Activated T-helper 2 cell treated with anti-CD3 and anti-CD28 coated beads, Interferon-gamma antibody, Interleukin-2, Interleukin-4, amounts not matched to agents 10 μg/mL and 5 μg/mL and 100 μg/mL, durations not matched to agents 14 hours and 24 hours and 36 hours (primary cell): ENCODE measurements at regions of chr9 and their contacts with region 1.

Region 1: DNA sequence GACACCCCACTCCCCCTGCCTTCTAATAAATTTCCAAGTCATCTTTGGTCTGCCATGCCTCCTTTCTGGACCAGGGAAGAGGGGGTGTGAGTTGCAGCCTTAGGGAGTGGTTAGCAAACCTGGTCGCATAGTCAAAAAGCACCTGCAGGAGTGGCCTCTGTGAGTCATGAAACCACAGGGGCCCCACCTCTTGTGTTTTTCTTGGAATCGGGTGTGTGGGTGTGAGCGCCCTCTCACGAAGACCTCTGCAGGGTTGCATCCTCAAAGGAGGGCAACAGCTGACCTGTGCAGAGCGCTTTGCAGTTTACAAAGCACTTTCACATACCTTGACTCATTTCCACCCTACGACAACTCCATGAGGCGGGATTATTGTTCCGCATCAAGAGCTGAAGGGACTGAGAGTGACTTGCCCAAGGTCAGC is 36.8 kb upstream of the TEX48 start:
- DNase-seq: peak; percentile 93
- H3K4me3 Mint-ChIP-seq: peak overlapping the region; percentile 38
- H3K27ac Mint-ChIP-seq: peak overlapping the region; percentile 94
- H3K4me1 Mint-ChIP-seq: peaks cover 74% of the 10 kb centered on the region
- H3K27me3 Mint-ChIP-seq: no peaks in the 10 kb centered on the region

Region 2: DNA sequence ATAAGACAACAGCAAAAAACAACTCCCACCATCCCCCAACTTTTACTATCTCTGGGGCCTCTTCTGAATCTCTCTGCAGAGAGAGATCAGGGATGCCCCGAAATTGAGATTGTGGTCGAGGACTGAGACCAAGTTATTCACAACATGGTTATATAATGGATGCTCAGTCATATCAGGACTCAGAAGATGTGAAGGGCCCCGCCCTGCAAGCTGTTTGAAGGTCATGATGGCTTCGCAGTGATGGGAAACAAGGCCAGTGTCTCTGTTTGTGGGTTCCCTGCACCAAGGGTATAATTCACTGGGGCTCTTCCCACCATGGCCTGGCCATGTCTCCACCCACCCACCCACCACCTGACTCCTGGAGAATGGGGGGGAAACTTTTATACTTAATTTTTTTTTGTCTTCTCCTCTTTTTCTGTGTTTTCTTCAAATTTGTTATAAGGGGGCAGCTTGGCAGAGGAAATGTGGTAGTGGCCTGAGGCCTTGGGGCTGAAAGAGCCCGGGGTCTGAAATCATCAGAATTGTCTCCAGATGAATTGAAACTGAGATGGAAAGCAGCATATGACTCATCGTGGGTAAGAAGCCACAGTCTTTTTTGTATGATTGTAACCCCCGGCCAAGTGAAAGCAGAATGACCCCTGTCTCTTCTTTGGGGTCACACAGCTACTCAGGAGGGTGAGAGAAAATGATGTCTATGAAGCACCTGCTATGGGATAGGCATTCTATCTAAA is 21.8 kb before region 1 on chr9:
- intact Hi-C with region 1: loop called (anchors 1 kb)
- DNase-seq: peak; percentile 75
- H3K4me3 Mint-ChIP-seq: peak overlapping the region; percentile 52
- H3K27ac Mint-ChIP-seq: peak overlapping the region; percentile 96
- H3K4me1 Mint-ChIP-seq: peaks cover 87% of the 10 kb centered on the region
- H3K27me3 Mint-ChIP-seq: no peaks in the 10 kb centered on the region

Region 3: GRCh38 chr9:114738581-114739316 is 19.9 kb after region 1 on chr9:
- intact Hi-C with region 1: loop called (anchors 1 kb)
- DNase-seq: peak; percentile 62
- H3K4me3 Mint-ChIP-seq: no peak overlapping the region
- H3K27ac Mint-ChIP-seq: peak overlapping the region; percentile 83
- H3K4me1 Mint-ChIP-seq: peaks cover 50% of the 10 kb centered on the region
- H3K27me3 Mint-ChIP-seq: no peaks in the 10 kb centered on the region